HEK293T (cell line): ENCODE measurements at regions of chr14 and their contacts with region 1.

Region 1: DNA sequence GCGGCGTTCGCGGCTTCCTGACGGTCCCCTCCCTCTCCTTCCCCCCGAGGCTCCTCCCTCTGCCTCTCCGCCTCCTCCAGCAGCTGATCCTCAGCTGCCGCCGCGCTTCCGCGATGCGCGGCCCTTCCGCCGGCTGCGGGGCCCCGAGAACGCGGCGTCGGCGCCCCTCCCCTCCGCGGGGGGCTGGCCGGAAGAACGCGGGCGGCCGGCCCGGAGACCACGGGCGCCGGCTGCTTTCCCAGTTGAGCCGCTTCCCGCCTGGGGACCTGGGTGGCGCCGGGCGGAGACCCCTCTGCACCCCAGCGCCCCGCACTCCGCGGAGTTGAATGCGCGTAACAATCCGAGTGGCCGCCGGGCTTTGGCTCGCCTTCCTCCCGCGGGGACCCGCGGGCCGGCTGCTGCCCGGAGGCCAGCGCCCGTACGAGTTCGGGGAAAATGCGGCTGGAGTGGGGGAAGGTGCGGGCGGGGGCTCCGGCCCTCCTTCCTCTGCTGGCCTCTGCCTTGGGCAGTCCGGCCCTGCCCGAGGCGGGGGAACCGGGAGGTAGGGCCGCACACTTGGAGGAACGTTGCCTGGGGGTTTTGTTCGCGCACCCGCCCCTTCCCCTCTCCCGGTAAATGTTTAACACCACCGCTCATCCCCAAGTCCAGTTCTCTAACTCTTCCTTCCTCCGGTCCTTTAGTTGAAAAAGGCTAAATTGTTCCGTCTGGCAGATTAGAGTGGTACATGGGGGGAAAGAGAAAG is 383 bp upstream of the DCAF5 start:
- DNase-seq: peak; percentile 91

Region 2: GRCh38 chr14:69129264-69129880 is 23.9 kb before region 1 on chr14:
- CTCF ChIA-PET with region 1: interaction called, 21 read pairs
- POLR2A ChIA-PET with region 1: interaction called, 24 read pairs
- DNase-seq: peak; percentile 78